CD8-positive, alpha-beta T cell (primary cell): ENCODE measurements at regions of chr10 and their contacts with region 1.

Region 1: DNA sequence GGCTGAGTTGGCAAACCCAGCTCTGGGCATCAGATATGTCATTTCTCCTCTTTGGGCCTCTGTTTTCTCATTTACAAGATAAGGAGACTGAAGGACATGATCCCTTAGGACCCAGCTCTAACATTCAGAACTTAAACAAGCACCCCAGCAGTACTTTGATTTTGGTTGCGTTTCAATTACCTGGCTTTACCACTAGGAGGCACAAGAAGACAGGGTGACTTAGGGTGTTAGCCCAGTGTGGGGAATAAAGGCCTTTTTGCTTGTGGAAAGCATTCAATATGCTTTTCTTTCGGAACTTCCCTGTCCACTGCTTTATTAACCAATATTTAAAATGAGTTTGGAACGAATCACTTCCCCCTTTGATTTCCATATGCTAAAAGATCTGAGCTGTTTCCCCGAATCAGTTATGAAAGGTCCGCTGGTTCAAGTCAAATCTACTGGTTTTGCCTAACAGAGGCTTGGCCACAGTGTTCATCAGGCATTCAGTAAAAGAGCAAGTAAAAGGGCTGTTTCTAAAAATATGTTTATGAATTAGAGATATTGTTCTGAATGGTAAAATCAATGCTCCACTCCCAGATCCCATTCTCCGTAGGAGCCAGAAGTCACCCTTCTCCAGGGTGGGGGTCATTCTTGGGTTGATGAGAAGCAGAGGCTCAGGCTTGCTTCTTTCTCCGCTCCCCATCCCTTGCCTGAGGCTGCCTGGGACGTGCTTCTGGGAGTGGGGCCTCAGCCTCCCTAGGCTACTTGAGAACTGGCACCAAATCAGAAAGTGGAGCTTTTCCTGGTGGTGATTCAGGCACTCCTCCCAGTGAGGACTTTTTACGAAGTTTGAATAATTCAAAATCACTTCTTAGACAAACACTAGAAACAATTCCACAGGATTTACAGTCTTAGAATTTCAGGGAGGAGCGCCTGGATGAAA is 105.5 kb downstream of the MYOF start:
- DNase-seq: peak in 6 of 9 experiments; percentile 22 to 80 (median 39)
- ATAC-seq: peak; percentile 83
- H3K4me3 ChIP-seq: no peak overlapping the region
- H3K4me3 Mint-ChIP-seq: no peak overlapping the region
- H3K27ac ChIP-seq: no peak overlapping the region
- H3K27ac Mint-ChIP-seq: no peak overlapping the region
- H3K4me1 ChIP-seq: no peaks in the 10 kb centered on the region
- H3K4me1 Mint-ChIP-seq: no peaks in the 10 kb centered on the region
- H3K27me3 ChIP-seq: no peaks in the 10 kb centered on the region
- H3K27me3 Mint-ChIP-seq: peaks cover 12% of the 10 kb centered on the region
- CTCF ChIP-seq: peak; percentile 90

Region 2: DNA sequence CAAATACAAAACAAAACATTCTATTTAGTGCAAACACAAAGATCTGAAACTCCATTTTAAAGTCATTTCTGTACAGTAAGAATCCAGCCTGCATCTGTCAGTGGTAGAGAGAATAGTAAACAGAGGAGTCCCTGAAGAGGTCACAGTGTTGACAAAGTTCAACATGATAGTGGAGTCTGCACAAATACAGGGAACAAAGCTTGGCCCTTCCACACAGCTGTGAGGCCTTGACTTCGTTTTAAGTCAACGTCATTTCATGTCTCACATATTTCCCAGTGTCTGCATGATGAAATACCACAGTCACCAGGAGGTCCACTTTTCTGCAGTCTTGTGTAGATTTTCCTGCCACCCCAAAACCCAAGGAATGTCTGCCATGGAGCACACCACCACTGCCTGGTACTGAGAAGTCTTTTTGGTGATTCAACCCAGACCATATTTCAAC is 270.0 kb before region 1 on chr10:
- CTCF ChIA-PET with region 1: no interaction called
- POLR2A ChIA-PET with region 1: no interaction called
- intact Hi-C with region 1: no loop called
- DNase-seq: no peak
- ATAC-seq: no peak
- H3K4me3 ChIP-seq: no peak overlapping the region
- H3K4me3 Mint-ChIP-seq: no peak overlapping the region
- H3K27ac ChIP-seq: no peak overlapping the region
- H3K27ac Mint-ChIP-seq: no peak overlapping the region
- H3K4me1 ChIP-seq: no peaks in the 10 kb centered on the region
- H3K4me1 Mint-ChIP-seq: no peaks in the 10 kb centered on the region
- H3K27me3 ChIP-seq: peaks cover 0 to 5% of the 10 kb centered on the region in 2 experiments
- H3K27me3 Mint-ChIP-seq: peaks cover 4% of the 10 kb centered on the region
- CTCF ChIP-seq: no peak

Region 3: GRCh38 chr10:93386631-93387369 is 10.2 kb after region 1 on chr10:
- CTCF ChIA-PET with region 1: interaction called, 61 read pairs
- POLR2A ChIA-PET with region 1: interaction called, 3 read pairs
- intact Hi-C with region 1: no loop called
- DNase-seq: peak in 2 of 9 experiments; percentile 35 to 52
- ATAC-seq: no peak
- H3K4me3 ChIP-seq: no peak overlapping the region
- H3K4me3 Mint-ChIP-seq: peak overlapping the region; percentile 46
- H3K27ac ChIP-seq: peak overlapping the region in 1 of 2 experiments; percentile 61
- H3K27ac Mint-ChIP-seq: peak overlapping the region; percentile 11
- H3K4me1 ChIP-seq: peaks cover 13% of the 10 kb centered on the region
- H3K4me1 Mint-ChIP-seq: peaks cover 14% of the 10 kb centered on the region
- H3K27me3 ChIP-seq: no peaks in the 10 kb centered on the region
- H3K27me3 Mint-ChIP-seq: no peaks in the 10 kb centered on the region
- CTCF ChIP-seq: no peak

Region 4: GRCh38 chr10:93413252-93413689 is 36.6 kb after region 1 on chr10:
- CTCF ChIA-PET with region 1: interaction called, 43 read pairs
- POLR2A ChIA-PET with region 1: interaction called, 3 read pairs
- intact Hi-C with region 1: no loop called
- DNase-seq: peak; percentile 1 to 71 (median 29)
- ATAC-seq: peak; percentile 81
- H3K4me3 ChIP-seq: no peak overlapping the region
- H3K4me3 Mint-ChIP-seq: peak overlapping the region; percentile 59
- H3K27ac ChIP-seq: peak overlapping the region; percentile 2 to 74
- H3K27ac Mint-ChIP-seq: peak overlapping the region; percentile 78
- H3K4me1 ChIP-seq: peaks cover 63% of the 10 kb centered on the region
- H3K4me1 Mint-ChIP-seq: peaks cover 65% of the 10 kb centered on the region
- H3K27me3 ChIP-seq: no peaks in the 10 kb centered on the region
- H3K27me3 Mint-ChIP-seq: no peaks in the 10 kb centered on the region
- CTCF ChIP-seq: no peak

Region 5: DNA sequence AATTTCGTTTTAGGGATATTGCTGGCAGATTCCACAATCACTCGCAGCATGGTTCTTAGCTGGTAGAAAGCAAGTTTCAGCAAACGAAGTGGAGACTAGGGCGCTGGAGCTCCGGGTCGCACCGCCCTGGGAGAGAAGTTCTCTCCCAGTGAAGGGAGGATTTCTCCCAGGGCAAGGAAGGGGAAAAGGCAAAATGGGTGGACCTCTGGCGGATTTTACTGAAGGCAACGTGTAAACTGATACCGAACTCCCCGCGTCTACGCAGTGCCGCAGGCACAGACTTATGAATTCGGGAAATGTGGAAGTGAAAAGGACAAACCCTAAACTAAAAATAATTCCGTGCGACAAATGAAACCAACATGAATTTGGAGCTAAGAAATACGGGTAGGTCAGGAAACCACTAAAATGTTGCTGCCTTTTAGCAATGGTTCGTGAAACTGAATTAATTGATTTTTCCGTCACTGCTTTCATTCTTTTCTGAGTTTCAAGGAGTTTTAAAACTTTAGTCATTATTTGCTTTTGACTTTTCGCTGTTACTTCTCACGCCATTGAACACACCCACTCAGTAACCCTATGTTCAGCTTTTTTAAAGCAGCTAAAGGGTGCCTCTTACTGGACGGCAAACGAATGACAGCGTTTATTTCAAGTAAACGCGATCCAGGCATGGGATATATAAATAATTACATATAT is 105.7 kb after region 1 on chr10 and contains the start of gene MYOF:
- CTCF ChIA-PET with region 1: interaction called, 746 read pairs
- POLR2A ChIA-PET with region 1: interaction called, 24 read pairs
- intact Hi-C with region 1: loop called (anchors 1 kb)
- DNase-seq: peak; percentile 10 to 79 (median 34)
- ATAC-seq: peak; percentile 95
- H3K4me3 ChIP-seq: peak within 1 kb of the TSS; percentile 38 to 44
- H3K4me3 Mint-ChIP-seq: peak within 1 kb of the TSS; percentile 84
- H3K27ac ChIP-seq: no peak within 1 kb of the TSS
- H3K27ac Mint-ChIP-seq: no peak within 1 kb of the TSS
- H3K4me1 ChIP-seq: peaks cover 6% of the 10 kb centered on the region
- H3K4me1 Mint-ChIP-seq: peaks cover 6% of the 10 kb centered on the region
- H3K27me3 ChIP-seq: peaks cover 3 to 10% of the 10 kb centered on the region in 2 experiments
- H3K27me3 Mint-ChIP-seq: peaks cover 31% of the 10 kb centered on the region
- CTCF ChIP-seq: peak; percentile 81
- total RNA-seq, gene MYOF: not detected

Region 6: GRCh38 chr10:93680412-93681047 is 303.9 kb after region 1 on chr10:
- CTCF ChIA-PET with region 1: no interaction called
- POLR2A ChIA-PET with region 1: no interaction called
- intact Hi-C with region 1: loop called in 1 of 2 experiments (anchors 5 kb)
- DNase-seq: peak in 2 of 9 experiments; percentile 9 to 18
- ATAC-seq: no peak
- H3K4me3 ChIP-seq: no peak overlapping the region
- H3K4me3 Mint-ChIP-seq: no peak overlapping the region
- H3K27ac ChIP-seq: no peak overlapping the region
- H3K27ac Mint-ChIP-seq: no peak overlapping the region
- H3K4me1 ChIP-seq: no peaks in the 10 kb centered on the region
- H3K4me1 Mint-ChIP-seq: no peaks in the 10 kb centered on the region
- H3K27me3 ChIP-seq: no peaks in the 10 kb centered on the region
- H3K27me3 Mint-ChIP-seq: peaks cover 3% of the 10 kb centered on the region
- CTCF ChIP-seq: no peak

Region 7: GRCh38 chr10:93916257-93917063 is 539.8 kb after region 1 on chr10:
- CTCF ChIA-PET with region 1: no interaction called
- POLR2A ChIA-PET with region 1: no interaction called
- intact Hi-C with region 1: loop called in 1 of 2 experiments (anchors 5 kb)
- DNase-seq: no peak
- ATAC-seq: no peak
- H3K4me3 ChIP-seq: no peak overlapping the region
- H3K4me3 Mint-ChIP-seq: no peak overlapping the region
- H3K27ac ChIP-seq: no peak overlapping the region
- H3K27ac Mint-ChIP-seq: no peak overlapping the region
- H3K4me1 ChIP-seq: no peaks in the 10 kb centered on the region
- H3K4me1 Mint-ChIP-seq: peaks cover 2% of the 10 kb centered on the region
- H3K27me3 ChIP-seq: no peaks in the 10 kb centered on the region
- H3K27me3 Mint-ChIP-seq: no peaks in the 10 kb centered on the region
- CTCF ChIP-seq: no peak

Region 8: DNA sequence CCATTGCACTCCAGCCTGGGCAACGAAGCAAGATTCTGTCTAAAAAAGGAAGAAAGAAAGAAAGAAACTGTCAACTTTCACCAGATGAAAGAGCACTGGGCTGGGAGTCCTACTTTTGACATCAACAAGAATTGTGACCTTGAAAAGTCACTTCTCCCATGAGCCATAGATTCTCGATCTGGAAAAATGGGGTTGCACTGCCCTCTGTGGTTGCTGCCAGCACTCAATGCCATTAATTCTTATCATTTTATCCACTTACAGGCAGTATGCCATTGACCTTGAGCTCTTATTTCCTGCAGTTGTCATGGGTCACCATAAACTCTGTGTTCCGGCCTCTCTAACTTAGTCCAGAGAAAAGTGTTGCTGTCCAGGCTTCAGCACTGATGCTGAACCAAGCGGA is 849.0 kb after region 1 on chr10:
- CTCF ChIA-PET with region 1: no interaction called
- POLR2A ChIA-PET with region 1: no interaction called
- intact Hi-C with region 1: no loop called
- DNase-seq: no peak
- ATAC-seq: no peak
- H3K4me3 ChIP-seq: no peak overlapping the region
- H3K4me3 Mint-ChIP-seq: no peak overlapping the region
- H3K27ac ChIP-seq: no peak overlapping the region
- H3K27ac Mint-ChIP-seq: no peak overlapping the region
- H3K4me1 ChIP-seq: no peaks in the 10 kb centered on the region
- H3K4me1 Mint-ChIP-seq: no peaks in the 10 kb centered on the region
- H3K27me3 ChIP-seq: no peaks in the 10 kb centered on the region
- H3K27me3 Mint-ChIP-seq: no peaks in the 10 kb centered on the region
- CTCF ChIP-seq: no peak